Activated CD4-positive, alpha-beta memory T cell treated with anti-CD3 and anti-CD28 coated beads, Interleukin-2, amount 10 ng/mL, durations not matched to agents 7 days and 5 days (primary cell): ENCODE measurements at regions of chr3 and their contacts with region 1.

Region 1: GRCh38 chr3:123559040-123559861 is 25.6 kb downstream of the HACD2 start:
- DNase-seq: no peak
- H3K4me3 Mint-ChIP-seq: no peak overlapping the region
- H3K27ac Mint-ChIP-seq: no peak overlapping the region
- H3K4me1 Mint-ChIP-seq: peaks cover 8% of the 10 kb centered on the region
- H3K27me3 Mint-ChIP-seq: no peaks in the 10 kb centered on the region

Region 2: GRCh38 chr3:123328851-123329635 is 230.2 kb before region 1 on chr3:
- CTCF ChIA-PET with region 1: interaction called, 12 read pairs
- POLR2A ChIA-PET with region 1: no interaction called
- DNase-seq: peak; percentile 74
- H3K4me3 Mint-ChIP-seq: no peak overlapping the region
- H3K27ac Mint-ChIP-seq: no peak overlapping the region
- H3K4me1 Mint-ChIP-seq: no peaks in the 10 kb centered on the region
- H3K27me3 Mint-ChIP-seq: peaks cover 3% of the 10 kb centered on the region

Region 3: GRCh38 chr3:123421353-123422174 is 137.7 kb before region 1 on chr3:
- CTCF ChIA-PET with region 1: no interaction called
- POLR2A ChIA-PET with region 1: no interaction called
- DNase-seq: no peak
- H3K4me3 Mint-ChIP-seq: no peak overlapping the region
- H3K27ac Mint-ChIP-seq: no peak overlapping the region
- H3K4me1 Mint-ChIP-seq: no peaks in the 10 kb centered on the region
- H3K27me3 Mint-ChIP-seq: peaks cover 3% of the 10 kb centered on the region

Region 4: DNA sequence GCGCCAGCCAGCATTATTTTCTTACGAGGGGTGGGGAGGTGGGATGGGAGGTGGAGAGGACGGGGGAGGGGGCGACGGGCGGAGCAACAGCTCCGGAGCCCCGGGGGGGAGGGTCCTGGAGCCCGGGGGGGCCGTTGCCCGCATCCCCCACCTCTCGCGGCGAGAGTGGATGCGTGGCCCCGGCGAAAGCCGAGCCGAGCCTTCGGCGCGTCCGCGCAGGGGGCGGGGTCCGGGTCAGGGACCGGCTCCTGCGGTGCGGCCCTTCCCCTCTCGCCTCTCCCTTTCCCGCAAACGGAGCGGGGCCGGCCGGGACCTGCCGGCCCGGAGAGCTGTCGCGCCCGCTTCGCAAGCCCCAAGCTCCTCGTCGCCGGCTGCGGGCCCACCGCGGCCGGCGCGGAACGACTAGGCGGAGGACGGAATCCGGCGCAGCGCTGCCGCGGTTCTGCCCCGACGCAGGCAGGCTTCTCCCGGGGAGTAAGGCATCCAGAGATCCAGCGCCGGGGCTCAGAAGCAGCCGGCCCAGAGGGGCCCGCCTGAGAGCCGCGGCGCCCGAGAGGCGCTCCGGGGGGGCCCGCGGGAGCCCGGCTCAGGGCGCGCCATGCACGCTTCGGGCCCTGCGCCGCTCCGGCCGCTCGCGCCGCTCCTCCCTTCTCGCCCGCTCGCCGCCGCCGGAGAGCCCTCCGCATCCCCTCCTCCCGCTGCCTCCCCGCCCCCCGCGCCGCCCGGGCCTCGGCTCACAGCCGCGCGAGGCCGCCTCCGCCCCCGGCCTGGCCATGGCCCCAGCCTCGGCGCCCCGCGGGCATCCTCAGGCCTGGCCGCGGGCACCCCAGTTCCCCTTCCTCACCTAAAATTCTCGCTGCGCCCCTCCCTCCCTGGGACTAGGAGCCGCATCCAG is 109.9 kb before region 1 on chr3:
- CTCF ChIA-PET with region 1: interaction called, 27 read pairs
- POLR2A ChIA-PET with region 1: no interaction called
- DNase-seq: no peak
- H3K4me3 Mint-ChIP-seq: no peak overlapping the region
- H3K27ac Mint-ChIP-seq: no peak overlapping the region
- H3K4me1 Mint-ChIP-seq: peaks cover 9% of the 10 kb centered on the region
- H3K27me3 Mint-ChIP-seq: peaks cover 53% of the 10 kb centered on the region

Region 5: GRCh38 chr3:123584988-123585937 is 26.0 kb after region 1 on chr3 and contains the start of gene HACD2:
- CTCF ChIA-PET with region 1: interaction called, 16 read pairs
- POLR2A ChIA-PET with region 1: interaction called, 4 read pairs
- DNase-seq: peak; percentile 95
- H3K4me3 Mint-ChIP-seq: no peak within 1 kb of the TSS
- H3K27ac Mint-ChIP-seq: peak within 1 kb of the TSS; percentile 65
- H3K4me1 Mint-ChIP-seq: peaks cover 27% of the 10 kb centered on the region
- H3K27me3 Mint-ChIP-seq: no peaks in the 10 kb centered on the region
- total RNA-seq, gene HACD2: 21.0 to 23.2 TPM